ENCODE measurements at regions of chr4 and their contacts with region 1.

Region 1: GRCh38 chr4:109574102-109574850 is 14.2 kb downstream of the MCUB start:
- DNase-seq: no peak
- CTCF ChIP-seq: no peak

Region 2: GRCh38 chr4:109562457-109563239 is 11.6 kb before region 1 on chr4:
- CTCF ChIA-PET with region 1: interaction called, 11 read pairs
- POLR2A ChIA-PET with region 1: no interaction called
- DNase-seq: no peak
- CTCF ChIP-seq: no peak

Measured in GM10248 (cell line).